GM10248 (cell line): ENCODE measurements at regions of chr9 and their contacts with region 1.

Region 1: DNA sequence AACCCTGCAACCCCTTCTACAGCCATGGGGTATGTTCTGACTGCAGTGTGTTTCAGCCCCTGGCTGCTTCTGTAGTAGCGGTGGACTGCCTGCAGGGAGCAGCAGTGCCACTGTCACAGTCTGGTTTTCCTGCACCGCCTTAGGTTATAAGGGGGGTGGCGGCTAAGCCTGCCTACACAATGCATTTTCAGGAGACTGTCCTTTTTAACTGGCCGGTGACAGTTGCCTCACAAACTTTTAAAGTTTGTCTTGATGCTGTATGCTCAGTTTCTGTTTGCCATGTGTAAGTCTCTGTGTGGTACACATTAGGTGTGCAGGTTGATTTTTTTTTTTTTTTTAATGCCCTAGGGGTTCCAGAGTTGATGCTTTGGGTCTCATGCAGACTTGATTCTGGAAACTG is 53.0 kb downstream of the NUP214 start:
- DNase-seq: peak; percentile 82
- CTCF ChIP-seq: peak; percentile 99

Region 2: DNA sequence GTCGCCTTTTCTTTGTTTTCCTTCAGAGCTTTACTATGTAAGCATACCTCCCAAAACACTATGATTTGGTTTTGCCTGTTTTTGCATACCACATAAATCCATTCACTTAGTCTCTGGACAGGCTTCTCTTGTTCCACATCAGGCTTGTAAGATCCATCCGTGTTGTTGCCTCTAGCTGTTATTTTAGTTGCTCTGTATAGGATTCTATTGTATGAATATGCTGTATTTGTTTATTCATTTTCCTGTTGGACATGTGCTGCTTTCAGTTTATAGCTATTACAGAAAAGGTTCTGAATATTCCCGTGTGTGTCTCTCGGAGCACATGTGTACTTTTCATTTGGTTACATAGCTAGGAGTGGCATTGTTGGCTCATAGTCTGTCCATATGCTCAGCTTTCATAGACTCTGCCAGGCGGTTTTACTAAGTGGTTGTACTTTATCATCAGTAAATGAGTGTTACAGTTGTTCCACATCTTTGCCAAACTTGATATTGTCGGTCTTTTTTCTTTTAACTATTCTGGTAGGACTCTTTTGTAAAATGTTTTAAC is 11.2 kb before region 1 on chr9:
- CTCF ChIA-PET with region 1: interaction called, 23 read pairs
- POLR2A ChIA-PET with region 1: no interaction called
- DNase-seq: no peak
- CTCF ChIP-seq: no peak

Region 3: GRCh38 chr9:131197160-131197911 is 19.0 kb after region 1 on chr9:
- CTCF ChIA-PET with region 1: interaction called, 43 read pairs
- POLR2A ChIA-PET with region 1: no interaction called
- DNase-seq: no peak
- CTCF ChIP-seq: no peak

Region 4: GRCh38 chr9:131214286-131214856 is 36.0 kb after region 1 on chr9:
- CTCF ChIA-PET with region 1: interaction called, 14 read pairs
- POLR2A ChIA-PET with region 1: no interaction called
- DNase-seq: no peak
- CTCF ChIP-seq: no peak

Region 5: GRCh38 chr9:131277910-131278701 is 99.7 kb after region 1 on chr9:
- CTCF ChIA-PET with region 1: interaction called, 15 read pairs
- POLR2A ChIA-PET with region 1: no interaction called
- DNase-seq: peak; percentile 87
- CTCF ChIP-seq: no peak

Region 6: DNA sequence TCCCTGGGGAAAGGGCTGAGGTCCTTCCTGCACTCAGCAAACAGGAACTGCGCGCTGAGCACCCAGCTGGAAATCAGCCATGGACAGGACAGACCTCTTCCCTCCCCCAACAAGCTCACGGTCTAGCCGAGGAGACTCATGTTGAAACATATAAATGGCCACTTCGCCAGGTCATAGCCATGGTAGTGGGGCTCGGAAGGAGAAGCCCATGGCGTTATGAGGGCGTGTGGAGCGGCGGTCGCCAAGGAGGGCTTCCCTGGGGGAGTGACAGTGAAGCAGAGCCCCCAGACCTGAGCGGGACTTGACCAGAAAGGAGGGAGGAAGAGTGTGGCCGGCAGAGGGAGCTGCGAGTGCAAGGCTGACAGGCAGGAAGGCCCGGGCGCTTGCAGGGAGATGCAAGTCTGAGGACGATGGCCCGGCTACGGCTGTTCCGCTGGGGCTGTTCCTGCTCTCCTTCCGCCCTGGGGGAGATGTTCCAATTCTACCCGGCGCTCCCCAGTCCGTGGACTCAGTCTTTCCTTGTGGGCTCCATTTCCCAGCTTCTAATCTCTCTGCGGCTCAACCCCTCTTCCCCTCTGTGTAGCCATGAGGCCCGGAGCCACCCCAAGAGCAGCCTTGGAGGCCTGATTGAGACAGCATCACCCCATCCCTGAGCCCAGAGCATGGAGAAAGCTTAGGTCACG is 171.6 kb after region 1 on chr9:
- CTCF ChIA-PET with region 1: interaction called, 13 read pairs
- POLR2A ChIA-PET with region 1: no interaction called
- DNase-seq: peak; percentile 92
- CTCF ChIP-seq: peak; percentile 90